ENCODE measurements at regions of chr17 and their contacts with region 1.

Region 1: DNA sequence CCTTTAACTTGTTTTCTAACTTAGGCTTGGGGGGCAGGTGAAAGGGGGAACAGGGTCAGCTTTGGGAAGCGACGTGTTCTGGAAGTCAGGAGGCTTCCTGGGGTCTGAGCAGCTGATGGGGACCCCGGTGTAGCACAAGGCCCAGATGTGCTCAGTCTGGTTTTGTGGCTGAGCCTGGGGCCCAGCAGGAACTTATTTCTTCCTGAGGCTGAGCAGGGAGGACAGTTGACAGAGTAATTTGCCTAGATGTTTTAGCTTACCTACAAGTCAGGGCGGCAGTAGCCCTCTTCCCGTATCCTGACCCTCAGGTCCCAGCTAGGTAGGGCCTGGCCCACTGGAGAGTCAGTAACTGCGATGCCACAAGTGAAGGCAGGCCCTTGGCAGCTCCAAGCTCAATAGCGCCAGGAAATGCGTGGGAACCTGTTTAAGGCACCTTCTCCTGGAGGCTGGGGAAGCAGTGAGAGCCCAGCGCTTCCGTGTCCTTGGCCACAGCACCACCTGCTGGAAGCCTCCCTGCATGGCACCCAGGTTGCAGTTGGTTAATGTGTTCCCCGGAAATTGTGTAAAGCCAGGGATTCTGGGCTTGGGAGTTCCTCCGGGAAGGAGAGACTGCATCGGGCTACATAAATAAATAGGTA is 5.2 kb downstream of the CCR7 start:
- DNase-seq: peak; percentile 77
- H3K4me3 ChIP-seq: no peak overlapping the region
- CTCF ChIP-seq: peak; percentile 97

Region 2: DNA sequence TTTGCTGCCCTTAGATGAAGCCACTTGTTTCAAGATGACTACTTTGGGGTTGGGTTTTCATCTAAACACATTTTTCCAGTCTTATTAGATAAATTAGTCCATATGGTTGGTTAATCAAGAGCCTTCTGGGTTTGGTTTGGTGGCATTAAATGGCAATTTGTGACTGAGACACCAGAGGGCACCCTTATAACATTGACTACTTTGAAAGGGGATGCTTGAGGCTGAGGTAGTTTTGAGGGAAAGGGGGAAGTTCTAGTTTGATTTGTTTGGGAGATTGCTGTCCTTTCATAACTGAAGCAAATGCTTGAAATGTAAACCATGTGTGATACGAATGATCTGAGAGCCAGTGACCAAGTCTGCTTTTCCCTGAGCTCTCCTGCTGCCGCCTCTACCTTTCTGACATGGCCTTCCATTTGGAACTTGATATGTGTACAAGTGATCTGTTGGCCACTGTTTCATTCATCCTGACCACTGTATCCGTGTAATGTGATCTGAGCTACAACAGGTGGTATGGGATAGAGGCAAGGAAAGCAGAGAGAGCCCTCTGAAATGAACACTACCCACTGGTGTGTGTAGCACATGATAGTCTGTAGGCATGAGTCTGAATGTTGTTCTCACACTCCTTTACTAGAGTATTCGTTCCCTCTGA is 256.9 kb before region 1 on chr17:
- CTCF ChIA-PET with region 1: interaction called, 15 read pairs
- POLR2A ChIA-PET with region 1: no interaction called
- DNase-seq: no peak
- H3K4me3 ChIP-seq: no peak overlapping the region
- CTCF ChIP-seq: peak; percentile 58

Region 3: GRCh38 chr17:40399185-40399584 is 160.9 kb before region 1 on chr17:
- CTCF ChIA-PET with region 1: interaction called, 53 read pairs
- POLR2A ChIA-PET with region 1: interaction called, 3 read pairs
- DNase-seq: peak; percentile 12
- H3K4me3 ChIP-seq: no peak overlapping the region
- CTCF ChIP-seq: peak; percentile 21

Region 4: GRCh38 chr17:40433551-40434415 is 126.3 kb before region 1 on chr17:
- CTCF ChIA-PET with region 1: interaction called, 65 read pairs
- POLR2A ChIA-PET with region 1: no interaction called
- DNase-seq: no peak
- H3K4me3 ChIP-seq: no peak overlapping the region
- CTCF ChIP-seq: peak; percentile 51

Region 5: GRCh38 chr17:40457964-40458791 is 101.9 kb before region 1 on chr17:
- CTCF ChIA-PET with region 1: interaction called, 12 read pairs
- POLR2A ChIA-PET with region 1: no interaction called
- DNase-seq: peak; percentile 63
- H3K4me3 ChIP-seq: no peak overlapping the region
- CTCF ChIP-seq: no peak

Region 6: DNA sequence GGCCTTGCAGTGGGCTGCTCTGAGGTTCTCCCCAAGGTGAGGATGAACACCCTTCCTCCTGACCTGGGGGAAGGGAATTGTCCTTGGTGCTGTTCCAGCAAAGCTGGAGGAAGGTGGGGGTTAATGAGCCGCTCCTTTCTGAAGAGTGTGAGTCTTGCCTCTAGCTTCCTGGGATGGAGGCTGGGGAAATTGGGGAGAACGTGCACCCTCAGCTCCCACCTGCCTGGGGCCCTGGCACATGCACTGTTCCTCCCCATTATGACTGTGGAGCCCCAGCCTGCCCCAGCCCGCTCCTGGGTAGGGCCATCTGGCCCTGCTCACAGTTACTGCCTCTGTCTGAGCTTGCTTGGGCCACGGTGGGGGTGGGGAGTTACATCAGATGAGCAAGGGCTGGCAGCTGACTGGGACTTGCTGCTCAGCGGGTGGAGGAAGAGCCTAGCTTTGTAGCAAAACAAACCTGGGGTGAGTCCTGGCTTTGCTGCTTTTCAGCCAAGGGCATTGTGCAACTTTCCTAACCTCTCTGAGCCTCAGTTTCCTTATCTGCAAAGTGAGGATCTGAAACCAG is 69.7 kb before region 1 on chr17:
- CTCF ChIA-PET with region 1: interaction called, 26 read pairs
- POLR2A ChIA-PET with region 1: no interaction called
- DNase-seq: no peak
- H3K4me3 ChIP-seq: no peak overlapping the region
- CTCF ChIP-seq: no peak

Region 7: DNA sequence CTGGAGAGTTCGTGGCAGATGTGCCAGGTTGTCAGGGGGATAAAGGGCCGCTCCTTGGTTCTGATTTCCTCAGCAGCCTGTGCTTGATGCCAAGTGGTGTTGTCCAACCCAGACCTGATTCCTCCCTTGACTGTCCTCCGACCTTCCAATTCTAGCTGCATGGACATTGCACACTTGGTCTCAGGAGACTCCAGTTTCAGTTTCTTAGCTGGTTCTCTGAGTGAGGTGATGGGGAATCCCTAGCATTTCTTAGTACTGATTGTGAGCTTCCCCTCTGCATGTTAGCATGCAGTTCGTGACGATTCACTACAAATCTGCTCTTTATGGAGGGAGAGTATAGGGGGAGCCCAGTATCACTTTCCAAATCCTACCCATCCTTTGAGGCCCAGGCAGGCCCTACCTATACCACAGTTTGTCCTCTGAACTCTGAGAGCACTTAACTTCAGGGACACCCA is 17.6 kb after region 1 on chr17:
- CTCF ChIA-PET with region 1: interaction called, 35 read pairs
- POLR2A ChIA-PET with region 1: no interaction called
- DNase-seq: no peak
- H3K4me3 ChIP-seq: no peak overlapping the region
- CTCF ChIP-seq: no peak

Measured in AG04449 (cell line).